GM10248 (cell line): ENCODE measurements at regions of chr7 and their contacts with region 1.

Region 1: DNA sequence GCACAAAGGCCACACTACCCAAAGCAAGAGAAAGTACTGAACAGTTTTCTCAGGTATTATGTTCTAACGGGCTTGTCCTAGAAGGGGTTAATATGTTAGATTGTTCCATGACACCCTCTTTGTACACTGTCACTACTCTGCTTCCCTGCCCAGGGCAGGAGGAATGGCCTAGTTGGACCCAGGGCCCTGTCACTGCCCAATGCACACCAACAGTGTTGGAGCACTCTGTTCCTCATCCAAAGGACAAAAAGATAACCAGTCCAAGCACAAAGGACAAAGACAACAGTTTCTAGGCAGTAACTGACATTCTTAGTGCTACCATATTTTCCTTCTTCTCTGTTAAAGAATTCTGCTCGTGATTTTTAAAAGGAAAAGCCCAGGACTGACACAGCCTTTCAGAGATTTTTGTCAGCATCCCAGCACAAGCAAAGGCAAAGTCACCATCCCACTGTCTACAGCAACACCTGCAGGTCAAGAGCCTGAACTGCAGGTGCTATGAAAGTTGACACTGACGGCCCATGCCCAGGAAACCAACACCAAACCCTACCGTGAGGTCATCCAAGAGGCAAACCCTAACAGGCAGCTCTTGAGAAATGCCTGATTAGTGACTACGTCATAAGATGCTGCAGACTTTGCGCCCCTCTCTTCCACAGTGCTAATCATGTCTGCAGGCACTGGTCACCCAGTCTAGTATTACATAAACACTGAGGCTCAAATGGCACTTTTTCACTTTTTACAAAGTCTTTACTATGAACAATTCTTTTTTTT is 13.2 kb downstream of the NUDCD3 start:
- DNase-seq: peak; percentile 69
- CTCF ChIP-seq: peak; percentile 93

Region 2: DNA sequence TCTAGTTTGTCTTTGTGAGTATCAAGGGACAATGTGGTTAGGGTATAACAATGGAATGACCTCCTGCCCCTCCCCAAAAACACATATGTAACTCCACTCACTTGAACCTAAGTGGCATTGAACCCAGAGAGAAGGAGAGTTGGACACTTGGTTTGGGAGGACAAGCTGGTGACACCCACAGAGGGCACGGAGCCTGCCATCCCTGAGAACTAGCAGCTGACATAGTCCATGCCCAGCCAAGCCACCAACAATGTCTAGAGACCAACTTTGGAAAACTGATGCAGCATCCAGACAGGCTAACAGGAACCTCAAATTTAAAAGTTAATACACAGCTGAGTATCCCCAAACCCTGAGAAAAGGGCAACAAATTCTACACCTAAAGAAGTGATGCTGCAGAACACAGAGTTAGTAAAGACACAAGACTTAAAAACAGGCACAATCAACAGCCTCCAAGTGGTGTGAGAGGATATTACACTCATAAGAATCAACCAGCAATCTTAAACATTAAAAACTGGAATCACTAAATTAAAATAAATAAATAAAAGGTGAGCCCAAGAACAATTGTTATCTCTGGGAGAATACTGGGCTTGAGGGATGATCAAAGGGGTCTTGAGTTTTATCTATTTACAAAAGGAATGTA is 14.0 kb before region 1 on chr7:
- CTCF ChIA-PET with region 1: interaction called, 18 read pairs
- POLR2A ChIA-PET with region 1: no interaction called
- DNase-seq: no peak
- CTCF ChIP-seq: peak; percentile 7